Activated CD8-positive, alpha-beta T cell treated with anti-CD3 and anti-CD28 coated beads, Interleukin-2, amount 10 ng/mL, durations not matched to agents 7 days and 5 days (primary cell): ENCODE measurements at regions of chr15 and their contacts with region 1.

Region 1: DNA sequence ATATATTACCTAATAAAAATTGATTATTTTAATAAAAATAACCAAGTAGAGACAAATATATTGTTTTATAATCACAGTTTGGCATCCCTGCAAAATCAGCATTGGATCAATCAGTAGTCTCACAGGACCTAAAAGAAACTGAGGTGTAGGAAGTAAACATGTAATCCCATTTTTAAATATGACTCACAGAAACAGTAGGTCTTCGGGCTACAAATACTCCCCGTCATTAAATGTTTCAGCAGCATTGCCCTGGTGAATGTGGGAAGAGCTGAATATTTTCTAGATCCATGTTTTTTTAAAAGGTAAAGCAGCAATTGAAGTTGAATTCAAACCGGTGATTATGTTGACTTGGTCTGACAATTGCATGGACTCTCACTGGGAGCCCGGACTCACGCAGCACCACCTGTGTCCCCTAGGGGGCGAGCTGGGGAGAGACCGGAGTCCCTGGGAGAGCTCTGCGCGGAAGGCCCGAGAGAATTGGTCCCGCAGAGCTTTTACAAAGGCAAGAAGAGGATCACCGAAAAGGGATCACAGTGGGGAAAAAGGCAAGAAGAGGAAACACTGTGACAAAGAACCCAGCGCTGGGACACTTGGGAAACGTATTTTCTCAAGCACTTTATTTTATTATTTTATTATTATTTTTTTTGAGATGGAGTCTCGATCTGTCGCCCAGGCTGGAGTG is 17.2 kb upstream of the USP3 start:
- DNase-seq: peak; percentile 92
- ATAC-seq: peak; percentile 96
- H3K4me3 Mint-ChIP-seq: no peak overlapping the region
- H3K27ac Mint-ChIP-seq: peak overlapping the region; percentile 62
- H3K4me1 Mint-ChIP-seq: peaks cover 53% of the 10 kb centered on the region
- H3K27me3 Mint-ChIP-seq: no peaks in the 10 kb centered on the region

Region 2: DNA sequence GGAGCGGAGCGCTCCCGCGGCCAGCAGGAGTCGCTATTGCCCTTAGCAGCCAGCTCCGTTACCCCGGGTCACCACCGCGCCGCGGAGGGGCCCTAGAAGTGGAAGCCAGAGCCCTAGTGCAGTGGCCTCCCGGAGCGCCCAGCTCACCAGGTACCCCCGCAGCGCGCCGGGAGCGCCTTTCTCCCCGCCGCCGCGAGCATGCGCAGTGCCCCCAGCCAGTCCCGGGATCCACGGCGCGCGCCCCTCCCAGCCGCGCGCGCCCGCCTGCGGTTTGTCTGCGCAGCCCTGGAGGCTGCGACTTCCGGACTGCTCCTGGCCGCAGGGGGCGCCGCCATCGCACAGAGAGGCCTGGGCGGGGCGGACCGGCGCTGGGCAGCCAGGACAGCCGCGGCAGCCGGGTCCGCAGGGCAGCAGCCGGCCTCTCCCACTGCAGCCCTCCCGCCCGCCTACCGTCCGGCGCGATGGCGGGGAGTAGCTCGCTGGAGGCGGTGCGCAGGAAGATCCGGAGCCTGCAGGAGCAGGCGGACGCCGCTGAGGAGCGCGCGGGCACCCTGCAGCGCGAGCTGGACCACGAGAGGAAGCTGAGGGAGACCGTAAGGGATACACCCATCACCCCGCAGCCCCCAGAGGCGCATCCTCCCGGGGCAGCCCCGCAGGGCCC is 439.0 kb before region 1 on chr15:
- CTCF ChIA-PET with region 1: no interaction called
- POLR2A ChIA-PET with region 1: no interaction called
- DNase-seq: peak; percentile 85
- ATAC-seq: peak; percentile 89
- H3K4me3 Mint-ChIP-seq: peak overlapping the region; percentile 83
- H3K27ac Mint-ChIP-seq: peak overlapping the region; percentile 48
- H3K4me1 Mint-ChIP-seq: peaks cover 30% of the 10 kb centered on the region
- H3K27me3 Mint-ChIP-seq: peaks cover 50% of the 10 kb centered on the region

Region 3: DNA sequence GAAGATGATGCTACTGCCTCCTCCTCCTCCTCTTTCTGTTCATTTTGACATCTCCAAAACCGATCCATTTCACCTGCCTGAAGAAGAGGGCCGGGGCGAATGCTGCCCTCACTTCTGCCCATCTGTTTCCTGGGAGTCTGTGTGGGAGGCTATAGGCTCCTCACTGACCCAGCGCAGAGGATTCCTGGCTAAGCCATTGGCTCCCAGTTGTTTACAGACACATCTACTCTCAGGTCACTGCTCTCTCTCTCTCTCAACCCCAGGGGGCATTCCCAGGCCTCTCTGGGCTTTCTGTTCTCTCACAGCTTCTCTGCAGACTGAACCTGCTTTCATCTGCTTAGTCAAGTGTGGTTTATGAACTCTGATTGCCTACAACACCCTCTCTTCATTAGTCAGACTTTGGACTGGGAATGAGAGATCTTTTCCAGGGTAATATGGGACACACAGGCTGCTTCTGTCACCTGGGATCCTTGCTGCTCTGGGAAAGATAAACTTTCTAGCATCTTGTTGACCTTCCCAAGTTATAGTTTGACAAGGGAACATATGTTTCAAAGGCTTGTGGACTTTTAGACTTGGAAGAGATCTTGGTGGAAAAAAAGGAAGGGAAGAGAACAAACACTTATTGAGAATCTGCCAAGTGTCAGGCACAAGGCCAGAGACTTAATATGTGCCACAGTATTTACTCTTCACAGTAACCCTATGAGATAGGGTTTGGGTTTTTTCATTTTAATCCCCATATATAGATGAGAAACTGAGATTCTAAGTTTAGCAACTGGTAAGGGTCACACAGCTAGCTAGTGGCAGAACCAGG is 13.0 kb before region 1 on chr15:
- CTCF ChIA-PET with region 1: interaction called, 13 read pairs
- POLR2A ChIA-PET with region 1: interaction called, 5 read pairs
- DNase-seq: no peak
- ATAC-seq: peak; percentile 47
- H3K4me3 Mint-ChIP-seq: no peak overlapping the region
- H3K27ac Mint-ChIP-seq: peak overlapping the region; percentile 54
- H3K4me1 Mint-ChIP-seq: peaks cover 32% of the 10 kb centered on the region
- H3K27me3 Mint-ChIP-seq: no peaks in the 10 kb centered on the region

Region 4: DNA sequence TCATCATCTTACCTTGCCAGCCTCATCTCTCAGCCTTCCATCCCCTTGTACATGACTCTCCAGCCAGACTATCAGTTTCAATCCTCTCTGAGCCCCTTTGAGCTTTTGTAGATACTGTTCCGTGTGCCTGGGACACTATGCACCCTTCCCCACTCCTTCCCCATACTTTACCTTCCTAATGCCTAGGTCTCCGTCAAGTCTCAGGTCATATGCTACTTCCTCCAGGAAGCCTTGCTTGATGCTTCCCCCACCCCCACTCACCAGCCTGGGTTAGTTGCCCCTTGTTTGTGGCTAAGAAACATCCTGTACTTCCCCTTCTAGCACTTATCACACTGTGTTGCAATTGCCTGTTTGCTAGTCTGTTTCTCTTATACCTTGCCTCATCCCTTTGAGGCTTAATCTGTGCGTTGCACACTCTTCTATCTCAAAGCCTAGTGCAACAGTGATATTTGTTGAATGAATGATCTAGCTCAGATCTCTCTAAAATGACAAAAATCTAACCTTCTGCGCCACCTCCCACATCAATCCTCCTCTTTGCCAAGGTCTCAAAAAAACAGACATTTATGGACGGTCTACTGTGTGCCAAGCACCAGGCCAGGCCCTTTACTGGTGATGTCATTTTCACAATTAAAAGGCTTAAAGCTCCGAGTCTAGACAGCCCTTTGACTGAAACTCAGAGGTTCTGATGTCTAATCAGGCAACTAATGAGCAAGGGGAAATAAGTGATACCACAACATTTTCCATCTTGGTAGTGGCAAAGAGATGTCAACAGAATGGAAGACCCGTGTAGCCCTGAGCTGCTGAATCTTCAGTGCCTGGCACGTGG is 10.6 kb after region 1 on chr15:
- CTCF ChIA-PET with region 1: interaction called, 172 read pairs
- POLR2A ChIA-PET with region 1: interaction called, 19 read pairs
- DNase-seq: peak; percentile 77
- ATAC-seq: peak; percentile 70
- H3K4me3 Mint-ChIP-seq: no peak overlapping the region
- H3K27ac Mint-ChIP-seq: no peak overlapping the region
- H3K4me1 Mint-ChIP-seq: peaks cover 51% of the 10 kb centered on the region
- H3K27me3 Mint-ChIP-seq: no peaks in the 10 kb centered on the region

Region 5: DNA sequence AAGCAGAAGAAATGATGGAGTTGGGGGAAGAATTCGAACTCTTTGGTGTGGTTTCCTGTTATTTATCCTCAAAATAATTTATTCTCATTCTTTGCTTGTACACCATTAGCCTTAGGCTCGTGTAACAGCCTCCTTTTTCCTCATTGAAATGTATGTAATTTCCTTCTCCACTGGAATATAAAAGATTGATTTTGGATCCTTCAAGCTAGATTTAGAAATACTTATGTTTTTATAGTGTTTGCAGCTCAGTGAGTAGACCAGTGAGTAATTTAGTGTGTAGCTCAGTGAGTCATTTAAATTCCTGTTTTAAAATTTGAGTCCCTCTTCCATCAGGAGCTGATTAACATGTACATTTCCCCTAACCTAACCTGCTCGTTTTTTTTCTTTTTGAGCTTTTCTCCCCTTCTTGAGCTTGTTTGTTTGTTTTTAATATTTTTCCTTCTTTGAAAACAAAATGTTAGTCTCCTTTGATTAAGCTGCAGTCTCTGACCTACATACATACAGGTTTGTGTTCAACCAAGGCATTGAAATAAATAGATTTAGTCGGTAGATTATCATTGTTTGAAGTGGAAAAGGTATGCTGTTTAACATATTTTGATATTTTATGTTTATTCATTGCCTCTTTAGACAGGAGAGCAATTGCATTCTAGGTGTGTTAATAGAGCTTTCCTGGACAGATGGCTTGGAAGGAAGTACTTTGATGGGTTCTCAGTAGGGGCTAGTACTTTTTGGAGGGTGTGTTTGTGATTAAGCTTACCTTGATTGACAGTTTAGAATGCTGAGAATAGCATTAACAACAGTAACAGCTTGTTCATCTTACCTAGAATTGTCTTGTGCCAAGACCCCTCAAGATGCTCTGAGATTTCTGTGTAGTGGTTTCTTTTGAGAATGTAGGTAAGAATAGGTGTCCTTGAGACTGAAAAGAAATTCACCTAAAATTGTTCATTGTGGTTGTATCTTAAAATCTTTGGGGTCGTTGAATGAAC is 23.0 kb after region 1 on chr15:
- CTCF ChIA-PET with region 1: interaction called, 172 read pairs
- POLR2A ChIA-PET with region 1: interaction called, 21 read pairs
- DNase-seq: no peak
- ATAC-seq: no peak
- H3K4me3 Mint-ChIP-seq: no peak overlapping the region
- H3K27ac Mint-ChIP-seq: peak overlapping the region; percentile 21
- H3K4me1 Mint-ChIP-seq: peaks cover 83% of the 10 kb centered on the region
- H3K27me3 Mint-ChIP-seq: no peaks in the 10 kb centered on the region